ENCODE measurements at regions of chr3 and their contacts with region 1.

Region 1: DNA sequence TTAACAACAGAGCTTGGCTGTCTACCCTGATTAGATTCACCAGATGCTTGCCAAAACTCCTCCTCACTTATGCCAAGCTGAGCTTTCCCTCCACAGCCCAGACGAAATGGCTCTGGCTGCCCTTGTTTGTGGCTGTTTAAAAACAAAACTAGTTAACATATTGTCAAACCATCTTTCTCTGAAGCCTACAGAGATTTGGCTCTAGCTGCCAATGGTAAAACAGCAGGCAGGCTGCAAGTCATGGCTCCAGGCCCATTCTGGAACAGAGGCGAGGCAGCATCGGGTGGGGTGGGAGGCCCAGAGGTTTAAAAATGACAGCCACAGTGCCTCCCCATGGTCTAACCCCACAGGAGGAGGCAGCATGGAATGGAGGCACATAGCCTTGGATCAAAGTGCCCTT is 75.9 kb downstream of the SCN5A start:
- DNase-seq: no peak
- H3K4me3 ChIP-seq: no peak overlapping the region
- H3K27ac ChIP-seq: no peak overlapping the region
- H3K4me1 ChIP-seq: no peaks in the 10 kb centered on the region
- H3K27me3 ChIP-seq: no peaks in the 10 kb centered on the region
- CTCF ChIP-seq: no peak

Region 2: DNA sequence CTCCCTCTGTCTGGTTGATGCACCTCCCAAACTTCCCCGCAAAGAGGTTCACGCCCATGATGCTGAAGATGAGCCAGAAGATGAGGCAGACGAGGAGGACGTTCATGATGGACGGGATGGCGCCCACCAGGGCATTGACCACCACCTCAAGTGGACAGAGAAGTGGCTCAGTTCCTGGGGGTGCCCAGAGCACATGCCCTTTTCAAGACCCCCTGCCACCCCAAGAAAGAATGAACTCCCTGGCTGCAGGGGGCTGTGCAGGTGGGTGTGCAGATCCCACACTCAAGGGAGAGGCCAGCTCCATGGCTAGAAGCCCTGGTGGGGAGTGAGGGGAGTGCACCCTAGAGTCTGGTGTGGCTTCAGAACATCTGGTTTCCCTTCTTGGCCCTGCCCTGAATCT is 13.3 kb before region 1 on chr3:
- CTCF ChIA-PET with region 1: no interaction called
- POLR2A ChIA-PET with region 1: interaction called, 21 read pairs
- intact Hi-C with region 1: no loop called
- DNase-seq: no peak
- H3K4me3 ChIP-seq: no peak overlapping the region
- H3K27ac ChIP-seq: no peak overlapping the region
- H3K4me1 ChIP-seq: no peaks in the 10 kb centered on the region
- H3K27me3 ChIP-seq: no peaks in the 10 kb centered on the region
- CTCF ChIP-seq: no peak

Measured in A673 (cell line).